Dorsolateral prefrontal cortex (tissue), 120 donors: ENCODE measurements at regions of chr9 and their contacts with region 1.

Region 1: GRCh38 chr9:108761655-108762347 is 94.0 kb downstream of the ACTL7B start:
- DNase-seq: peak in 9 of 10 donors; percentile 32 to 73 (median 60)
- H3K4me3 ChIP-seq: no peak overlapping the region
- H3K27ac ChIP-seq: peak overlapping the region in 7 of 59 donors; percentile 1 to 49 (median 22)
- H3K27me3 ChIP-seq: no peaks in the 10 kb centered on the region
- CTCF ChIP-seq: peak; percentile 77 to 97 (median 92)

Region 2: DNA sequence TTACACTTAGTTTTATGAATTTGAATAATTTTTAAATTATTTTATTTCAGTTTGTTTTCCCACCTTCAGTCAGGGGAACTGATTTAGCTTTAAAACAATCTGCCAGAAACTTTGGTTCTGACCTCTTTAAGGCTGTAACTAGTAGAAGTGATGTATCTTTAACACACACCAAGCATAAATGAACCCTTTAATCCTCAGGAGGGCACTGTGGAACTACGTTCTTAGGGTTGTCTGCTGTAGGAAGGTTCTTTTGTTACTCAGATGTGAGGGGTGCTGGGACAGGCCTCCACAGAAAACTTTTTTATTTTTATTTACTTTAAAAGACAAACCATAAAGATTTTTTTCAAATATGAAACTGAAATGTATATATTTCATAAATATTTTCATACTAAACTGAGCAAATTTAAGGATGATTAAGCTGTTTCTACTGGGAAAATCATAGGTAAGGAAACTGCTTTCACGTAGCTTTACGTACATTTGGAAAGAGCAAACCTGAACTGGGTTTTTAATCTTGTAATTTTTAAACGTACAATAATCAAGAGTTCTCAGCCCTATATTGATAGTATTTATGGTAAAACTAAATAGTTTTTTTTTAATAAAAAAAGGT is 1277.6 kb before region 1 on chr9:
- intact Hi-C with region 1: loop called (anchors 5 to 10 kb)
- DNase-seq: no peak
- H3K4me3 ChIP-seq: peak overlapping the region in 15 of 59 donors; percentile 2 to 78 (median 73)
- H3K27ac ChIP-seq: peak overlapping the region in 2 of 59 donors; percentile 12 to 46
- H3K27me3 ChIP-seq: peaks cover 0 to 17% (median 0%) of the 10 kb centered on the region in 45 donors
- CTCF ChIP-seq: peak; percentile 36 to 83 (median 66)

Region 3: DNA sequence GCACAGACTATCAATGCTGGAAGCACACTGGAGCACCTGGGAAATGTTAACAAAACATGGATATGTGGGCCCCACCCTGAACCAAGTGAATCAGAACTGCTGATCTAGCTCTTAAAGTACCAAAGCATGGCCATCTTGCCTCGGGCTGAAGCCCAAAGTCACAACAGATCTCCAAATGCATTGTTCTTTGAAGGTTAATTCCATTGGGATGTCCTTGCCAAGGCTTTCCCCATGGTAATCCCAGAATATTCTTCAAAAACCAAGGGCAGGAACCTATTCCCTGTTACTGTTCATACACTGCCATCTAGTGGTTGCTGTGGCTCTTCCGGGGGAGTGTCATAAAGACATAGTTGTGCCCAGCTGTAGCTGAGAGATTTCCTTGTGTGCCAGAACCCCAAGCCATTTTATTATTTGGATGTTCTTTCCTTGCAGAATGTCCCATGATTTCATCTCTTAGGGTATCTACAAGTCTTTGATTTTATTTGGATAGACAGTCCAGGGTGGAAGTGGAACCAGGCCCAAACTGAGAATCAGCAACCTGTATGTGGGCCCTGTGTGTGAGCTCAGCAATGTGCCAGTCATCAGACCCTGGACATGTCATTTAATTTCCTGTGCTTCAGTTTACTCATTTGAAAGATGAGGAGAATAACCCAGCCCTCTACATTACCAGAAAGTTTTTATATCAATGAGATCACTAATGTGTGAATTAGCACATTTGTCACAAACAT is 196.0 kb before region 1 on chr9:
- intact Hi-C with region 1: loop called in 1 of 2 experiments (anchors 5 kb)
- DNase-seq: peak in 8 of 10 donors; percentile 10 to 70 (median 43)
- H3K4me3 ChIP-seq: no peak overlapping the region
- H3K27ac ChIP-seq: peak overlapping the region in 3 of 59 donors; percentile 6 to 24 (median 10)
- H3K27me3 ChIP-seq: peaks cover 0 to 12% (median 0%) of the 10 kb centered on the region in 45 donors
- CTCF ChIP-seq: peak; percentile 68 to 96 (median 88)

Region 4: DNA sequence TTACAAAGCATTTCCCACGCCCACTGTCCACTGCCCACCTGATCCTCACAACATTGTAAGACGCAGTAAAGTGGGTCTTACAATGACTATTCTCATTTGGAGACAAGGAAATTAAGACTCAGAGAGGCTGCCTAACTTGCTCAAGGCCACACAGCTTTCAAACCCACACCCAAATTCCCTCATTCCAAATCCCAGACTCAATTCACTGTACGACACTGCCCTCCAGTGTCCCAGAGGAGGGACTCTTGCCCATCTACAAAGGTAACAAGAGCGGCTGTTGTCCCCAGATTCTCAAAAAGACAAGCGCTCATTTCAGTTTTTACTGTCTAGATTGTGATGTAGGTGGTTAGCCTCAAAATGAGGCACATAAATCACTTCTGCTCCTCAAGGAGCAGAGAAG is 90.6 kb before region 1 on chr9:
- intact Hi-C with region 1: loop called in 1 of 2 experiments (anchors 5 kb)
- DNase-seq: no peak
- H3K4me3 ChIP-seq: no peak overlapping the region
- H3K27ac ChIP-seq: no peak overlapping the region
- H3K27me3 ChIP-seq: no peaks in the 10 kb centered on the region
- CTCF ChIP-seq: peak in 3 of 56 donors; percentile 16 to 30 (median 17)

Region 5: GRCh38 chr9:108743901-108744371 is 17.9 kb before region 1 on chr9:
- intact Hi-C with region 1: no loop called
- DNase-seq: no peak
- H3K4me3 ChIP-seq: no peak overlapping the region
- H3K27ac ChIP-seq: peak overlapping the region in 2 of 59 donors; percentile 6 to 22
- H3K27me3 ChIP-seq: no peaks in the 10 kb centered on the region
- CTCF ChIP-seq: no peak

Region 6: GRCh38 chr9:108933718-108934322 is 172.0 kb after region 1 on chr9 and contains the start of gene ELP1:
- intact Hi-C with region 1: no loop called
- DNase-seq: peak; percentile 90 to 95 (median 94)
- H3K4me3 ChIP-seq: peak within 1 kb of the TSS; percentile 76 to 100 (median 94)
- H3K27ac ChIP-seq: peak within 1 kb of the TSS; percentile 76 to 97 (median 93)
- H3K27me3 ChIP-seq: no peaks in the 10 kb centered on the region
- CTCF ChIP-seq: peak in 40 of 56 donors; percentile 9 to 55 (median 36)
- total RNA-seq, gene ELP1: 30.6 to 86.2 (median 48.5) TPM

Region 7: DNA sequence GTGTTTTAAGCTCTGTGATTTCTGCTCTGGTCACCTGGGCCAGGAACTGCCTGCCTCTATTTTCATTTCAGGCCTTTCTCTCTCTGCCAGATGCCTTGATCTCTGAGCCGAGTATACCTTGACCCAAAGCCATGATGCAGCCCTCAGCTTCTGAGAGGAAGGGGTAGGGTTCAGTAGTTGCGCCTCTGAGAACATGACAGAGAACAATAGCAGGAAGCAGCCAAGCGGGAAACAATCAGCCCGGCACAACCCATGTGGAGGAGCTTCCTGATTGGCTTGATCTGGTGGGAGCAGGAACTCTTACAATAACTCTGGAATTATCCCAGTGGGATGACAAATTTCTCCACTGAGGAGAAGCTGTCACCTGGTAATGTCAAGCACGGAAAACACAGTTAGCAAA is 1145.6 kb after region 1 on chr9:
- intact Hi-C with region 1: no loop called
- DNase-seq: no peak
- H3K4me3 ChIP-seq: peak overlapping the region in 2 of 59 donors; percentile 1 to 9
- H3K27ac ChIP-seq: peak overlapping the region in 50 of 59 donors; percentile 3 to 80 (median 60)
- H3K27me3 ChIP-seq: no peaks in the 10 kb centered on the region
- CTCF ChIP-seq: no peak